ENCODE measurements at regions of chr1 and their contacts with region 1.

Region 1: DNA sequence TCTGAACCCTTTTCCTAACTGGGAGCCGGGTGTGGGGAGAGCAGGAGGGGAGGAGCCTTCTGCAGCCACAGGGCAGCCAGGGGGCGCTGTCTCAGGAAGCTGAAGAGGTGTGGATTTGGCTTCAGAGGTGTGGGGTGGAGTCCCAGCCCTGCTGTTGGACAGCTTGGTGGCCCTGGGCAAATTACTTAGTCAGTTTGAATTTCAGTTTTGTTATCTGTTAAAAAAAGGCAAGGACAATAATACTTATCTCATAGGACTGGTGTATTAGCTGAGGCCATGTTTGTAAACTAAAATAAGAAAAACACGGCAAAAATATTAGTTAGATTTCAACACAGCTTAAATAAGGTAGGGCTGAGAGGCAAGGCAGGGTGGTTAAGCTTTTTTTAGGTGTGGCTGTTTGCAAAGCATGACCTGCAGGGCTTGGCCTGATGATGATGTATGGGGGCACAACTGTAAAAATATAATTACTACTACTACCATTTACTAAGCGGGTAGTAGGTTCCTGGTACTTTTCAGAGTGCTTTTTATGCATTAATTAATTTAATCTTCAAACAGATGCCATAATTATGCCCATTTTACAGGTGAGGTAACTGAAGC is 111.8 kb downstream of the PLXNA2 start:
- DNase-seq: peak; percentile 96
- H3K4me3 Mint-ChIP-seq: peak overlapping the region; percentile 12
- H3K27ac Mint-ChIP-seq: peak overlapping the region; percentile 74
- H3K4me1 Mint-ChIP-seq: peaks cover 31% of the 10 kb centered on the region
- H3K27me3 Mint-ChIP-seq: no peaks in the 10 kb centered on the region
- CTCF ChIP-seq: peak; percentile 99

Region 2: DNA sequence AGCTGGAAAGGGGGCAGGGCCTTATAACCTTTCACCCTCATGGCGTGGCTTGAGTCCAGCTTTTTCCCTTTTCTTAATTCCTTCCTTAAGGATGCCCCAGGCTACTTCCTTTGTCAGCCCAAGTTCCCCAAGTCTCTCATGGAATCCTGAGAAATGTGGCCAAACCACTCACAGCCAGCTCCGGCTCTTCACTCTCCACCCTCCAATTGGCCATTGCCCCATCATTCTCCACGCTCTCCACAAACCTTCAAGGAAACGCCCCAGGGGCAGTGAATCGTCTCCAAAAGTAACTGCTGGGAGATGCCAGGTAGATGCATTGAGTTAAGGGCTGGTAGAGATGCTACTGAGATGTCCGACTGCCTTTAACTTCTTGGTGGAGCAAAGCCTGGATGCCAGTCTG is 108.0 kb before region 1 on chr1:
- CTCF ChIA-PET with region 1: interaction called, 30 read pairs
- POLR2A ChIA-PET with region 1: interaction called, 6 read pairs
- intact Hi-C with region 1: loop called (anchors 5 kb)
- DNase-seq: peak; percentile 21
- H3K4me3 Mint-ChIP-seq: no peak overlapping the region
- H3K27ac Mint-ChIP-seq: peak overlapping the region; percentile 41
- H3K4me1 Mint-ChIP-seq: no peaks in the 10 kb centered on the region
- H3K27me3 Mint-ChIP-seq: peaks cover 8% of the 10 kb centered on the region
- CTCF ChIP-seq: no peak

Region 3: GRCh38 chr1:208101661-208102431 is 30.5 kb before region 1 on chr1:
- CTCF ChIA-PET with region 1: interaction called, 10 read pairs
- POLR2A ChIA-PET with region 1: interaction called, 3 read pairs
- intact Hi-C with region 1: no loop called
- DNase-seq: peak; percentile 99
- H3K4me3 Mint-ChIP-seq: no peak overlapping the region
- H3K27ac Mint-ChIP-seq: no peak overlapping the region
- H3K4me1 Mint-ChIP-seq: peaks cover 37% of the 10 kb centered on the region
- H3K27me3 Mint-ChIP-seq: no peaks in the 10 kb centered on the region
- CTCF ChIP-seq: no peak

Region 4: GRCh38 chr1:208149776-208150514 is 17.6 kb after region 1 on chr1:
- CTCF ChIA-PET with region 1: interaction called, 124 read pairs
- POLR2A ChIA-PET with region 1: interaction called, 9 read pairs
- intact Hi-C with region 1: no loop called
- DNase-seq: no peak
- H3K4me3 Mint-ChIP-seq: no peak overlapping the region
- H3K27ac Mint-ChIP-seq: no peak overlapping the region
- H3K4me1 Mint-ChIP-seq: peaks cover 10% of the 10 kb centered on the region
- H3K27me3 Mint-ChIP-seq: no peaks in the 10 kb centered on the region
- CTCF ChIP-seq: no peak

Region 5: DNA sequence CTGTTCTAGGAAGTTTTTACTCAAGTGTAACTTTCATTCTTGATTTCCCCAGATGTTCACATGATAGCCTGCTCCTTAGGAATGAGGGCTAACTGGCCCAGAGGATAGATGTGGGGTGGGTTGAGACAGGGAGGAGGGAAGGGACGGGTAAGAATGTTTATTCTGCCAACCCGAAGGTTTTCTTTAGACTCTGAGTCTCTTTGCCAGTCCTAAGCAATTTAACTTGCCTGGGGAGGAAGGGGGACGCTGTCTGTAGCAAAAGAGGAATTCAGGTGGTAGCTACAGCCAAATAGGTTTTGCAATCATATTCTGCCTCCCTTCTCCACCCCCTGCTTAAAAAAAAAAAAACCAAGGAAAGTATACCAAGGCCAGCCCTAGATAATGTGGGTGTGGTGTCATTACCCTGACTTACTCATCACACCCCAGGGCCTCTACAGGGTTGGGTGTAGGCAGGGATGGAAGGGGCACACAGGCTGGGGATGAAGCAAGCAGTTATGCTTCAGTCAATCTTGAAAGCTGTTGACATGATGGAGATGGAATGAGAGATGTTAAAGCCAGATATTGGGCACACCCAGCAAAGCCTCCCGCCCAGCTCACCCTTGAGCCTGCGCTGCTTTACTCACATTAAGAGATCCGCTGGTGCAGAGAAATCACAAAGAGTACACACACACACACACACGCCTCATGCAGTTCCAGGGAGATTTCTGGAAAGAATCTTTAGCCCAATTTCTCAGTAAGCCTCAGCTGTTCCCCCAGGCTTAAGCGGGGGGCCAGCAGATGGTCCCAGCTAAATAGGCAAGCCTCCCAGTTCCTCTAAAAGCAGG is 51.9 kb after region 1 on chr1:
- CTCF ChIA-PET with region 1: interaction called, 132 read pairs
- POLR2A ChIA-PET with region 1: interaction called, 28 read pairs
- intact Hi-C with region 1: loop called (anchors 1 kb)
- DNase-seq: peak; percentile 100
- H3K4me3 Mint-ChIP-seq: peak overlapping the region; percentile 58
- H3K27ac Mint-ChIP-seq: peak overlapping the region; percentile 78
- H3K4me1 Mint-ChIP-seq: peaks cover 61% of the 10 kb centered on the region
- H3K27me3 Mint-ChIP-seq: no peaks in the 10 kb centered on the region
- CTCF ChIP-seq: no peak

Region 6: DNA sequence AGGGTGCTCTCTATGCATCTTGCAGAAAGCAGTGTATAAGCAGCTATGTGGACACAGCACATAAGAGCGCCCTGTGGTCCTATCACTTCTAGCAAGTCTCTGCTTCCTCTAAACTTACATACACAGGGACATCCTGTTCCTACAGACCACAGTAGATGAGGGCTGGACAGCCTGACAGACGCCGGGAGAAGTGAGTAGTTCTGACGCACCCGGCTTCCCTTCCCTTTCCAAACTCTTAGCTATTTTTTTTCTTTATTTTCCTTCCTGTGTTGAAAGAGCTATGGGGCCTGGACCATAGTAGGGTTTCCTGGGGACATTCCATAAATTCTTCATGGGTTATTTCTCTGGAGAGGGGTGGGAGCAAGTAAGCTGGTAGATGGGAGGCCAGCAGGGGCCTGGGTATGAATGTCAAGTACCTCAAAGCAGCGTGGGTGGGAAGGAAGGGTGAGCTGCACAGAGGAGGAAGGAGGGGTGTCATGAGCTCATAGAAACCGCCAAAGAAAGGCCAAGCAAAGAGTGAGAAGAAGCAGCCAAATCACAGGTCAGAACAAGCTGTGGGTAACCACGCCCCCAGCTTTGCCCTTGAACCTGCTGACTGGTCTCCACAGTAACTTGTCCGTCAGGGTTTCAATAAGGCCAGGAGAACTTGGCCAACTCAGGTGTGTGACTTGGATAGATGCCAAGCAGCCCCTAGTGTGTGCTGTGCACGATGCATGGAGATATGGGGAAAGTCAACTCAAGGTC is 75.2 kb after region 1 on chr1:
- CTCF ChIA-PET with region 1: interaction called, 34 read pairs
- POLR2A ChIA-PET with region 1: interaction called, 13 read pairs
- intact Hi-C with region 1: loop called (anchors 1 kb)
- DNase-seq: peak; percentile 100
- H3K4me3 Mint-ChIP-seq: peak overlapping the region; percentile 43
- H3K27ac Mint-ChIP-seq: peak overlapping the region; percentile 89
- H3K4me1 Mint-ChIP-seq: peaks cover 30% of the 10 kb centered on the region
- H3K27me3 Mint-ChIP-seq: no peaks in the 10 kb centered on the region
- CTCF ChIP-seq: no peak